Tibial artery (tissue), 4 donors: ENCODE measurements at regions of chr5 and their contacts with region 1.

Region 1: GRCh38 chr5:172764849-172765765 is 5.9 kb downstream of the DUSP1 start:
- DNase-seq: peak; percentile 97 to 98
- H3K4me3 ChIP-seq: peak overlapping the region; percentile 78 to 80
- H3K27ac ChIP-seq: peak overlapping the region; percentile 96 to 98
- H3K4me1 ChIP-seq: peaks cover 0 to 18% (median 7%) of the 10 kb centered on the region in 4 donors
- H3K27me3 ChIP-seq: no peaks in the 10 kb centered on the region
- CTCF ChIP-seq: no peak

Region 2: GRCh38 chr5:172748341-172748843 is 16.7 kb before region 1 on chr5:
- intact Hi-C with region 1: loop called (anchors 2 kb)
- DNase-seq: peak; percentile 81 to 98
- H3K4me3 ChIP-seq: peak overlapping the region; percentile 5 to 6
- H3K27ac ChIP-seq: peak overlapping the region; percentile 90 to 92
- H3K4me1 ChIP-seq: peaks cover 0 to 80% (median 40%) of the 10 kb centered on the region in 4 donors
- H3K27me3 ChIP-seq: no peaks in the 10 kb centered on the region
- CTCF ChIP-seq: peak in 1 of 2 experiments; percentile 22